KBM-7 (cell line): ENCODE measurements at regions of chr9 and their contacts with region 1.

Region 1: DNA sequence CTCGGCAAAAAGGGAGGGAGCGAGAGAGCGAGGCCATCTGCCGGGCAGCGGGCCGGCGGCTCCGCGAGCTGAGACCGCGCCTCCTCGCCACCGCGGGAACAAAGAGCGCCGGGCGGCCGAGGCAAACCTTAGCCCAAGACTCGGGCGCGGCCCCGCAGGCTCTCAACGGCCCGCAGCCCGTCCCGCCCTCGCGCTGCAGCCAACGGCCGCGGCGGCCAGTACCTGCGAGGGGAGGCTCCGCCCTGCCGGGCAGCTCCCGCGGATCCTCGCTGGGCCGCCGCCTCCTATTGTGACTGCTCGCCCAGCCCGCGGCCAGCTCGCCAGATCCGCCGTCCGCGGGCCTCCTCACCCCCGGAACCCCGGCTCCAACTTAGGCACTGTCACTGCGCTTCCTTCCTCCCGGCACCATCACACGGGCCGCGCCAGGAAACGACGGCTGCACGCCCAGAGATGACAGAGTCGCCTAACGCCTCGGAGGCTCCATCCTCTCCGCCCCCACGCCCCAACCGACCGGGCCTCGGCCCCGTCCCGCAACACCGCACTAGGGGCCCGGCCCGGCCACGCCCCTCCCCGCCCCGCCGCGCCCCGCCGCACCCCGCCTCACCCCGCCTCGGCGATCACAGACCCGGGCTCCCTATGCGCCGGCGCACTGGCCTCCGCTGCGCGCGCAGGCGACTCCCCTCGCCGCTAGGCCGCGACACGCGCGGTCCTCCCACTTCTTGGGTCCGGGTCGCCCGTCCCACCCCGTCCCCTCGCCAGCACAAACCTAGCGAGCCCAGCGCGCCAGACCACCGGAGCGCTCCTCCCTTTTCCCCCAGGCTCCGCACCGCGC is 479 bp upstream of the RNF38 start:
- DNase-seq: peak; percentile 82

Region 2: DNA sequence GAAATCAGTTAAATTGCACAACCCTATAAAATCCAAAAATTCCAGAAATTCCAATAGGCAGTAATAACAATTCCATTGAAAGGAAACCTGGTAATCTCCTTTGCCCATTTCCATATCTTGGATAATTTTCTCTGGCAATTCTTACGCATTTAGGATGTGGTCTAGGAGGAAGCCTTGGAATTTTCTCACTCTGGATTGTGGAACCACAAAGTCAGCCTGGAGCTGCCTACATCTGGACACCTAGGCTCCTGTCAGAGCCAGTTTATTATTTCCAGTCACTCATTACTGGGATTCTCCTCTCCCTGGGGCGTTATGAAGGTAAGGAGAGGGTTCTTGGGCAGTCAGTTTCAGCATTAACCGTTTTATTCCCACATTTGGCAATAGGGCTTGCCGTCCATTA is 102.0 kb before region 1 on chr9:
- in situ Hi-C with region 1: no loop called
- DNase-seq: no peak

Region 3: GRCh38 chr9:36572515-36573418 is 172.2 kb after region 1 on chr9 and contains the start of gene MELK:
- in situ Hi-C with region 1: loop called (anchors 25 kb)
- DNase-seq: peak; percentile 85